Activated CD4-positive, alpha-beta memory T cell treated with anti-CD3 and anti-CD28 coated beads, Interleukin-2, amount 10 ng/mL, durations not matched to agents 7 days and 5 days (primary cell): ENCODE measurements at regions of chr4 and their contacts with region 1.

Region 1: GRCh38 chr4:152535903-152536544 is at the start of gene FBXW7:
- DNase-seq: peak; percentile 100
- H3K4me3 Mint-ChIP-seq: peak within 1 kb of the TSS; percentile 86
- H3K27ac Mint-ChIP-seq: peak within 1 kb of the TSS; percentile 97
- H3K4me1 Mint-ChIP-seq: peaks cover 50% of the 10 kb centered on the region
- H3K27me3 Mint-ChIP-seq: no peaks in the 10 kb centered on the region
- total RNA-seq, gene FBXW7: 59.8 to 66.8 TPM

Region 2: DNA sequence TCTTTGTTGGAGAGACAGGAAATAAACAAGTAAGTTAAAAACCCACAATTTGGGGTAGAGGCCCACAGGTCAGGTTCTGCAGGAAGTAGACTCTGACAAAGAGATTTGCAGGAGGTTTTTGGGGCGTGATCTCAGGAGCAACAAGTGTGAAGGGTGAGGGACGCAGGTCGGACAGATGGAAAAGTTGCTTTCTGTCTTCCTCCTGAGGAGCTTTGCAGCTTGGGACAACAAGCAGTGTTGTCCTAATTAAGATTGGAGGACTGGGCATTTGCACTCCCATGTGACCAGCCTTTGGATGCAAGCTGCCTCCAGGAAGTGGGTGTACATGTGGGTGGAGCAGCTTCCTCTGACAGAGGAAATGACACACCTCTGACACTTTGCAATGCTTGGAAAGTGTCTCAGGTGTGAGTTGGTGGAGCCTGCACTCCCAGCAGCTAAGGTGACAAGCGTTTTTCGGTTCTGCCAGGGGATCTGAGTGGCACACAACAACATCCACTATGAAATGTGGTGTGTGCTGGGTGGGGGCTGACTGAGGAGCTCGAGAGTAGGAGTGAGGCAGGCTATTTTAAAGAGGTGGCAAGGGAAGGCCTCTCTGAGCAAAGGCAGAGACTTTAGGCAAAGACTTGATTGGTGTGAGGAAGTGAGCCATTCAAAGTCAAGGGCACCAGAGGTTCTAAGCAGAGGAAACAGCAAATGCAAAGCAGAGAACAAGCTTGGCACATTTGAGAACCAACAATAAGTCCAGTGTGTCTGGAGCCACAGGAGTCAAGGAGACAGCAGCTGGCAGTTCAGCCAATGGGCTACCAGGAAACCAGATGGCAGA is 435.4 kb before region 1 on chr4:
- CTCF ChIA-PET with region 1: no interaction called
- POLR2A ChIA-PET with region 1: interaction called, 12 read pairs
- DNase-seq: peak; percentile 89
- H3K4me3 Mint-ChIP-seq: peak overlapping the region; percentile 66
- H3K27ac Mint-ChIP-seq: peak overlapping the region; percentile 100
- H3K4me1 Mint-ChIP-seq: peaks cover 82% of the 10 kb centered on the region
- H3K27me3 Mint-ChIP-seq: no peaks in the 10 kb centered on the region

Region 3: GRCh38 chr4:152510349-152511147 is 25.5 kb before region 1 on chr4:
- CTCF ChIA-PET with region 1: interaction called, 3 read pairs
- POLR2A ChIA-PET with region 1: interaction called, 55 read pairs
- DNase-seq: no peak
- H3K4me3 Mint-ChIP-seq: peak overlapping the region; percentile 60
- H3K27ac Mint-ChIP-seq: peak overlapping the region; percentile 36
- H3K4me1 Mint-ChIP-seq: peaks cover 42% of the 10 kb centered on the region
- H3K27me3 Mint-ChIP-seq: no peaks in the 10 kb centered on the region

Region 4: GRCh38 chr4:152559641-152560040 is 23.6 kb after region 1 on chr4:
- CTCF ChIA-PET with region 1: interaction called, 27 read pairs
- POLR2A ChIA-PET with region 1: interaction called, 266 read pairs
- DNase-seq: no peak
- H3K4me3 Mint-ChIP-seq: no peak overlapping the region
- H3K27ac Mint-ChIP-seq: no peak overlapping the region
- H3K4me1 Mint-ChIP-seq: peaks cover 30% of the 10 kb centered on the region
- H3K27me3 Mint-ChIP-seq: peaks cover 1% of the 10 kb centered on the region

Region 5: GRCh38 chr4:152585023-152585441 is 49.0 kb after region 1 on chr4:
- CTCF ChIA-PET with region 1: interaction called, 3 read pairs
- POLR2A ChIA-PET with region 1: interaction called, 28 read pairs
- DNase-seq: peak; percentile 19
- H3K4me3 Mint-ChIP-seq: peak overlapping the region; percentile 67
- H3K27ac Mint-ChIP-seq: peak overlapping the region; percentile 91
- H3K4me1 Mint-ChIP-seq: peaks cover 17% of the 10 kb centered on the region
- H3K27me3 Mint-ChIP-seq: peaks cover 4% of the 10 kb centered on the region

Region 6: DNA sequence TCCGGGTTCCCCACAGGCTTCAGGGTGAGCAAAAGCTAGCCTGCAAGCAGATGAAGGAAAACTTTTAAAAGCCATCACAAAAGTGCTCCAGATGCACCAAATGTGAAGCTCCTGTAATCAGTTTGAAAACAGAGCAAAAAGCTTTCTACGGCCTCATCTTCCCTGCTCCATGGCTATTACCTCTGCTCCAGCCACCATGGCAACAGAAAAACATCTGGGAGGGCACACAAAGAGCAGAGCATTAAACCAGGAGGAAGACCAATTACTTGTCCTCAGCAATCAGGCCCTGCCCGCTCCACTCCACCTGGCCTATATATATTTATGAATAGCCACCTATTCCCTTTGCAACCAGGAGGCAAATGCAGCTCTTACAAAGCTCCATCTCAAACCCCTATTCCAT is 110.2 kb after region 1 on chr4:
- CTCF ChIA-PET with region 1: interaction called, 6 read pairs
- POLR2A ChIA-PET with region 1: interaction called, 32 read pairs
- DNase-seq: no peak
- H3K4me3 Mint-ChIP-seq: no peak overlapping the region
- H3K27ac Mint-ChIP-seq: no peak overlapping the region
- H3K4me1 Mint-ChIP-seq: peaks cover 49% of the 10 kb centered on the region
- H3K27me3 Mint-ChIP-seq: no peaks in the 10 kb centered on the region

Region 7: GRCh38 chr4:152779513-152780266 is 243.7 kb after region 1 on chr4 and contains the starts of genes ARFIP1 and TIGD4:
- CTCF ChIA-PET with region 1: no interaction called
- POLR2A ChIA-PET with region 1: interaction called, 24 read pairs
- DNase-seq: peak; percentile 97
- H3K4me3 Mint-ChIP-seq: peak within 1 kb of the TSS; percentile 99
- H3K27ac Mint-ChIP-seq: peak within 1 kb of the TSS; percentile 94
- H3K4me1 Mint-ChIP-seq: peaks cover 46% of the 10 kb centered on the region
- H3K27me3 Mint-ChIP-seq: peaks cover 11% of the 10 kb centered on the region
- total RNA-seq, gene ARFIP1: 15.5 to 16.3 TPM
- total RNA-seq, gene TIGD4: 0.13 to 0.35 TPM